SK-N-SH (cell line): ENCODE measurements at regions of chr6 and their contacts with region 1.

Region 1: GRCh38 chr6:34248727-34249551 is at the start of gene SMIM29:
- DNase-seq: peak; percentile 98
- H3K4me3 ChIP-seq: peak within 1 kb of the TSS; percentile 72 to 89
- H3K27ac ChIP-seq: peak within 1 kb of the TSS; percentile 78 to 97
- H3K4me1 ChIP-seq: peaks cover 21 to 22% of the 10 kb centered on the region in 2 experiments; a peak in 3 of 4 replicates
- H3K27me3 ChIP-seq: no peaks in the 10 kb centered on the region
- CTCF ChIP-seq: peak; percentile 77
- EP300 ChIP-seq: no peak
- RAD21 ChIP-seq: peak; percentile 79
- polyA plus RNA-seq, gene SMIM29: 50.2 and 52.2 TPM in 2 replicates

Region 2: GRCh38 chr6:34115403-34115795 is 133.5 kb before region 1 on chr6:
- CTCF ChIA-PET with region 1: no interaction called
- POLR2A ChIA-PET with region 1: no interaction called
- DNase-seq: no peak
- H3K4me3 ChIP-seq: no peak overlapping the region
- H3K27ac ChIP-seq: no peak overlapping the region
- H3K4me1 ChIP-seq: peaks cover 0 to 4% of the 10 kb centered on the region in 2 experiments; a peak in 1 of 4 replicates
- H3K27me3 ChIP-seq: no peaks in the 10 kb centered on the region; the same call in 1 of the 2 replicates
- CTCF ChIP-seq: no peak
- EP300 ChIP-seq: no peak
- RAD21 ChIP-seq: no peak

Region 3: GRCh38 chr6:34392497-34393190 is 143.7 kb after region 1 on chr6 and contains the start of gene NUDT3:
- CTCF ChIA-PET with region 1: interaction called, 44 read pairs
- POLR2A ChIA-PET with region 1: no interaction called
- DNase-seq: peak; percentile 96
- H3K4me3 ChIP-seq: peak within 1 kb of the TSS; percentile 76 to 92
- H3K27ac ChIP-seq: peak within 1 kb of the TSS; percentile 62 to 87
- H3K4me1 ChIP-seq: peaks cover 3 to 11% of the 10 kb centered on the region in 2 experiments; a peak in 2 of 4 replicates
- H3K27me3 ChIP-seq: no peaks in the 10 kb centered on the region
- CTCF ChIP-seq: peak; percentile 78
- EP300 ChIP-seq: no peak; a peak in 1 of 4 replicates
- RAD21 ChIP-seq: peak; percentile 66
- polyA plus RNA-seq, gene NUDT3: 11.9 and 14.4 TPM in 2 replicates

Region 4: GRCh38 chr6:34414999-34415858 is 166.3 kb after region 1 on chr6:
- CTCF ChIA-PET with region 1: interaction called, 56 read pairs
- POLR2A ChIA-PET with region 1: interaction called, 9 read pairs
- DNase-seq: peak; percentile 47
- H3K4me3 ChIP-seq: no peak overlapping the region
- H3K27ac ChIP-seq: 0 out of 4 replicates have a peak overlapping the region, but pooled peaks of 1 of the 2 experiments have one; percentile 1
- H3K4me1 ChIP-seq: no peaks in the 10 kb centered on the region
- H3K27me3 ChIP-seq: no peaks in the 10 kb centered on the region
- CTCF ChIP-seq: peak; percentile 74
- EP300 ChIP-seq: no peak
- RAD21 ChIP-seq: peak; percentile 78

Region 5: GRCh38 chr6:34425498-34426410 is 176.8 kb after region 1 on chr6 and contains the start of gene RPS10:
- CTCF ChIA-PET with region 1: interaction called, 15 read pairs
- POLR2A ChIA-PET with region 1: interaction called, 3 read pairs
- DNase-seq: peak; percentile 99
- H3K4me3 ChIP-seq: peak within 1 kb of the TSS; percentile 74 to 94
- H3K27ac ChIP-seq: peak within 1 kb of the TSS; percentile 66 to 84
- H3K4me1 ChIP-seq: peaks cover 7 to 20% of the 10 kb centered on the region in 2 experiments; a peak in 3 of 4 replicates
- H3K27me3 ChIP-seq: no peaks in the 10 kb centered on the region
- CTCF ChIP-seq: no peak
- EP300 ChIP-seq: no peak
- RAD21 ChIP-seq: no peak
- polyA plus RNA-seq, gene RPS10: 4,475 and 5,166 TPM in 2 replicates

Region 6: DNA sequence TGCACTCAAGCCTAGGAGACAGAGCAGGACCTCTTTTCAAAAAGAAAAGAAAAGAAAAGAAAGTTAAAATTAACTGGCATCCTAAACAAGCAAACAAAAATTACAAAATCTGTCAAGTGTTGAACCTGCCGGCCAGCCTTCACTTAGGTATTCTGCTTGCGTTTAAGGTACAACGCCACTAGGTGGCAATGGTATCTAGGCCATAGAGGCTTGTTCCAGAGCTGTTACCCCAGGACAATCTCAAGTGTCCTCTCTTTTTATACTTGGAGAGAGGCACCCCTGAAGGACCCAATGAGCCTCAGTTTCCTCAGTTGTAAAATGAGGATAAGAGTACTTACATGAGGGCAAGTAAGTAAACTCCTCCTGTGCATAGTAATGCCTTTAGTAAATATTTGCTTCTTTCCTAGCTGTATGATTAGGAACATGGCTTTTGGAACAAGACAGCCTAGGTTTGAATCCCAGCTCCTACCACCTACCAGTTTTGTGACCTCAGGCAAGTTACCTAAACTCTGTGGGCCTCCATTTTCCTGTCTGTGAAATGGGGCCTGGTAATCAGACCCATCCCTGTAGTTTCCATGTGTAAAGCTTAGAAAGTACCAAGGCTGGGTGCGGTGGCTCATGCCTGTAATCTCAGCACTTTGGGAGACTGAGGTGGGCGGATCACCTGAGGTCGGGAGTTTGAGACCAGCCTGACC is 211.1 kb after region 1 on chr6:
- CTCF ChIA-PET with region 1: interaction called, 18 read pairs
- POLR2A ChIA-PET with region 1: no interaction called
- DNase-seq: peak; percentile 63
- H3K4me3 ChIP-seq: no peak overlapping the region
- H3K27ac ChIP-seq: no peak overlapping the region
- H3K4me1 ChIP-seq: peaks cover 0 to 3% of the 10 kb centered on the region in 2 experiments; a peak in 1 of 4 replicates
- H3K27me3 ChIP-seq: no peaks in the 10 kb centered on the region
- CTCF ChIP-seq: peak; percentile 55
- EP300 ChIP-seq: no peak
- RAD21 ChIP-seq: peak; percentile 87